ENCODE measurements at regions of chr17 and their contacts with region 1.

Region 1: DNA sequence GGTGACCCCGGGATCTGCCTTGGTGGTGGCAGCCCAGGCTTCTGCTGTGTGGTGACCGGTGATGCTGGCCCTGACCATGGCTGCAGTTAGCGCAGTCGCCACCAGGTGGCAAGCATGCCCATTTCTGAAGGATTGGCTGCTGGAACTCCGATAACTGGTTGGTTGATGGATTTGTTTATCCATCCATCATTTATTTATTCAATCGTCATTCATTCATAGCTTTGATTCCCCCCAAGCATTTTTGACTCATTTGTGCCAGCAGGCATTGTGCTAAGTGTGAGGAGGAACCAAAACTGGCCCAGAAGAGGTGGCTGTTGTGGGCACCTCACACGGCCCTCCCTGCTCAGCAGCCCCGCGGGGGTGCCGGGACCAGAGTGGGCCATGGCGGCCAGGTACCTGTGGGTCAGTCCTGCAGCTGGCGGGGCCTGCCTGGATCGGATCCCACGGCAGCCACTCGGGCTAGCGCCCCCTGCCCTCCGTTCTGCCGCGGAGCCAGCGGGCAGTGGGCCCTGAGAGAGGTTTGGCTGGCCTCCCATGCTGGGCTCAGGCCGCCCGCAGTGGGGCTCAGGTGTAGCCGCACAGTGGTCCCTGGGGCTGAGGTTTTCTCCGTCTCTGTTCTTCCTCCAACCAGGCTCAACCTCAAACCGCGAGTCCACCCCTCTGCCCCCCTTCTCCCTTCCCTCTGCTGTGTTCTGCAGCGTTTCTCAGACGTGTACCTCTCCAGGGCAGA is 28.8 kb upstream of the ITGA3 start:
- DNase-seq: peak; percentile 92
- ATAC-seq: peak; percentile 82

Region 2: GRCh38 chr17:50087246-50087911 is 60.3 kb after region 1 on chr17:
- intact Hi-C with region 1: loop called (anchors 5 kb)
- DNase-seq: peak; percentile 86
- ATAC-seq: peak; percentile 87

Region 3: DNA sequence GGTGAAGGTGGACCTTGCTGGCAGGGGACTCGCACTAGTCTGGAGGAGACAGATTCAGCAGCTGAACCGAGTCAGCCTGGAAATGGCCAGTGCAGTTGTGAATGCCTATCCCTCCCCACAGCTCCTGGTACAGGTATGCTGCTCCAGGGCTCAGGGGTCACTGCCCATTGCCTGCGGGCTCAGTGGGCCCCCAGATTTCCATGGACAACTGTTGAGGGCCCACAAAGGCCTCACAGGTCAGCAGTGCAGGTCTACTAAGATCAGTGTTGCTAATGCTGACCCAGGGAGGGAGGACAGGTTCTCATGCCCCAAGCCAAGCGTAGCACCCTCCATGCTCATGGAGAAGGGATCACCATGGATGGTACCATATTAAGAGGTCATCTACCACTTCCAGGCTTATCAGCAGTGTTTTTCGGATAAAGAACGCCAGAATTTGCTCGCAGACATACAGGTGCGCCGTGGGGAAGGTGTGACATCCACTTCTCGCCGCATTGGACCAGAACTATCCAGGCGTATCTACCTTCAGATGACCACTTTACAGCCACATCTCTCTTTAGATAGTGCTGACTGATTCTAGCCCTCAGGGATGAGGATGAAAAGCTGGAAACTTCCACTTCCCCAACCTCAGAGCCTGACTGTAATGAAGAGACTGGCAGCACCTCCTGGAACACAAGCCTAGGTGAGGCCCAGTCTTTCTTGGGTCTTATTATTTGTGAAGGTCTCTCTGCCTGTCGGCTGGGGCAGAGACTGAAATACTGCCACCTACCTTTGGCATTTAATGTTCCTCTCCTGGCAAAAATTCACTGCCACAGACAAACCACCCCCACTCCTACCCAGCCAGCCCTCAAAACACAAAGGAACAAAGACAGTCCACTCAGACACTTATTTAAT is 353.5 kb after region 1 on chr17:
- intact Hi-C with region 1: no loop called
- DNase-seq: no peak
- ATAC-seq: no peak

Region 4: DNA sequence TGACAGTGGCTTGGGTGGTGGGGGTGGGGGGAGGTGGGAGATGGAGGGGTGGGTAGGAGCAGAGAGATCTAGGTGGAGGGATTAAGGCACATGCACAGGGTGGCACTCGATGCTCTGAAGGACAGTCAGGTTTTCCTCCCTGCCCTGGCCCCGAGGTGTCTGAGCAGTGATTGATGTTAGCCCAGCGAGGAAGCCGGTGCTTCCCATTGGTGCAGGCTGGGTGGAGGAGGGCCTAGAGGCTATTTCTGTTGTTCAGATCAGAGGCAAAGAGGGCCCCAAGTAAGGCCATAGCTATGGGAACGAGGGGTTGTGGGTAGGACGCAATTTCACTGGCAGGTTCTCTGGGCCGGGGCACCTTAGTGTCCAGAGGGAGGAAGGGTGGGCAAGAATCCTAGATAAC is 556.6 kb after region 1 on chr17:
- intact Hi-C with region 1: no loop called
- DNase-seq: no peak
- ATAC-seq: no peak

Measured in sciatic nerve (tissue), 2 donors.